ENCODE measurements at regions of chrX and their contacts with region 1.

Region 1: DNA sequence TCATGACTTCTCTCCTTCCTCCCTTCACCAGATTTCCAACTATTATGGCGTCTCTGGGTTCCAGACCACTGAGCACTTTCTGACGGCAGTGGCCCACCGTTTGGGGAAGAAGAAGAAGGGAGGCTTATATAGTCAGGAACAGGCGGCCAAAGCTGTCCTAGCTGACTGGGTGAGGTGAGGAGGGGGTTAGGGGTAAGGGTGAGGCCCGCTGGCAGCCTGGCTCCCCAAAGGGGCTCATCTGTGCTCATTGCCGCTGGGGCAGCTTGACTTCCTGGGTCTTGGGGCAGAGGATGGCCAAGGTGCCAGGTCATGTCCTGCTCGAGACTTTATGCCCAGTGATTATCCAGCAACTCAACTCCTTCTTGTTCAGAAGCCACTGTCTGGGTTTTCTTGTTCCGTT is 21.8 kb downstream of the GNL3L start:
- DNase-seq: no peak
- H3K4me3 ChIP-seq: no peak overlapping the region
- H3K27ac ChIP-seq: no peak overlapping the region
- H3K4me1 ChIP-seq: no peaks in the 10 kb centered on the region
- H3K27me3 ChIP-seq: no peaks in the 10 kb centered on the region
- CTCF ChIP-seq: no peak

Region 2: GRCh38 chrX:54470054-54470760 is 81.6 kb before region 1 on chrX:
- CTCF ChIA-PET with region 1: no interaction called
- POLR2A ChIA-PET with region 1: interaction called, 27 read pairs
- intact Hi-C with region 1: no loop called
- DNase-seq: no peak
- H3K4me3 ChIP-seq: no peak overlapping the region
- H3K27ac ChIP-seq: no peak overlapping the region
- H3K4me1 ChIP-seq: 0 out of 2 replicates have a peak, but pooled peaks cover 6% of the 10 kb centered on the region
- H3K27me3 ChIP-seq: no peaks in the 10 kb centered on the region
- CTCF ChIP-seq: no peak

Region 3: GRCh38 chrX:54570332-54570731 is 18.5 kb after region 1 on chrX:
- CTCF ChIA-PET with region 1: no interaction called
- POLR2A ChIA-PET with region 1: no interaction called
- intact Hi-C with region 1: no loop called
- DNase-seq: no peak
- H3K4me3 ChIP-seq: no peak overlapping the region
- H3K27ac ChIP-seq: no peak overlapping the region
- H3K4me1 ChIP-seq: no peaks in the 10 kb centered on the region
- H3K27me3 ChIP-seq: no peaks in the 10 kb centered on the region
- CTCF ChIP-seq: no peak

Measured in PC-9 (cell line).